ENCODE measurements at regions of chr16 and their contacts with region 1.

Region 1: DNA sequence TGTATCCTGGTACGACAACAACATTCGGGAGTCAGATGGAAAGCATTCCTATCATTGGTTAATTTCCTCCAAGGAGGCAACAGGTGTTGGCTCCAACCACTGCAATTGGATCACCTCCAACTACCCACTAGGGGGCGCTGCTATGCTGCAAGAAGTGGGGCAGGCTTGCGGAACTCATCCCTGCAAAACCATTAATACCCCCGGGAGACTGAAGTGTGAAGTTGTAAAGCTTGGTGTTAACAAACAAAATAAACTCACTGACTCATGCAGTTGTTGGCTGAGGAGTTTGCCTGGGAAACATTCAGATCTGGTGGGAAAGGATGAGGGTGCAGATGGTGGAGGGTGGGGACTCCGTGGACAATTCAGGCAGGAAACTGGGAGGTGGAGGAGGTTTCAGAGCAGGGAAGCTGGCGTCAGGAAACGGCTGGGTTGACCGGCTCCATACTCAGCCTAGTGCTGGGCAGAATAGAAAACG is 84.9 kb downstream of the HS3ST2 start:
- DNase-seq: peak; percentile 73
- H3K4me3 ChIP-seq: peak overlapping the region in 1 of 2 experiments; percentile 34; a peak in 1 of 4 replicates
- H3K27ac ChIP-seq: no peak overlapping the region
- H3K4me1 ChIP-seq: peaks cover 0 to 4% of the 10 kb centered on the region in 2 experiments; a peak in 1 of 4 replicates
- H3K27me3 ChIP-seq: no peaks in the 10 kb centered on the region
- CTCF ChIP-seq: peak; percentile 86
- EP300 ChIP-seq: no peak
- RAD21 ChIP-seq: peak; percentile 94

Region 2: GRCh38 chr16:22874394-22874793 is 24.5 kb before region 1 on chr16:
- CTCF ChIA-PET with region 1: interaction called, 29 read pairs
- POLR2A ChIA-PET with region 1: no interaction called
- DNase-seq: no peak
- H3K4me3 ChIP-seq: no peak overlapping the region
- H3K27ac ChIP-seq: no peak overlapping the region; a peak in 1 of 4 replicates
- H3K4me1 ChIP-seq: peaks cover 0 to 22% of the 10 kb centered on the region in 2 experiments; a peak in 1 of 4 replicates
- H3K27me3 ChIP-seq: no peaks in the 10 kb centered on the region
- CTCF ChIP-seq: no peak
- EP300 ChIP-seq: no peak
- RAD21 ChIP-seq: no peak

Region 3: GRCh38 chr16:22924492-22924891 is 25.6 kb after region 1 on chr16:
- CTCF ChIA-PET with region 1: interaction called, 39 read pairs
- POLR2A ChIA-PET with region 1: no interaction called
- DNase-seq: no peak
- H3K4me3 ChIP-seq: no peak overlapping the region
- H3K27ac ChIP-seq: no peak overlapping the region
- H3K4me1 ChIP-seq: peaks cover 0 to 6% of the 10 kb centered on the region in 2 experiments; a peak in 1 of 4 replicates
- H3K27me3 ChIP-seq: no peaks in the 10 kb centered on the region
- CTCF ChIP-seq: no peak
- EP300 ChIP-seq: no peak
- RAD21 ChIP-seq: no peak

Region 4: DNA sequence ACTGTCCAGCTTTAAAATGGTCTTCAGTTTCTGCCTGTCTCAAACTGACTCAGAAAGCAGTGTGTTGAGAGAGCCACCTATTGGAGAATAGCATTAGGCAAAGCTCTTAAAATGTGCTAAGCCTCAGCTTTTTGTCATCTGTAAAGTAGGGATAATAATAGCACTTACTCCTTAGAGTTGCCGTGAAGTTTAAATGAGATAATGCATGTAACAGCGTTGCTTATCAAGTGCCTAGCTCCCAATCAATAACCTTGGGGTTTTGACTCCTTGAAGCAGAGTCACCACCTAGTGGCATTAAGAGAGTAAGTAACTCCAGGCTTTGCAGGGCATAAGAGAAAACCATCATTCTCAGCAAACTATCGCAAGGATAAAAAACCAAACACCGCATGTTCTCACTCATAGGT is 78.4 kb after region 1 on chr16:
- CTCF ChIA-PET with region 1: interaction called, 165 read pairs
- POLR2A ChIA-PET with region 1: no interaction called
- DNase-seq: no peak
- H3K4me3 ChIP-seq: no peak overlapping the region
- H3K27ac ChIP-seq: no peak overlapping the region
- H3K4me1 ChIP-seq: no peaks in the 10 kb centered on the region
- H3K27me3 ChIP-seq: no peaks in the 10 kb centered on the region
- CTCF ChIP-seq: peak; percentile 38; the same call in 1 of the 2 replicates
- EP300 ChIP-seq: no peak
- RAD21 ChIP-seq: 0 out of 2 replicates have a peak, but pooled peaks have one; percentile 55

Region 5: DNA sequence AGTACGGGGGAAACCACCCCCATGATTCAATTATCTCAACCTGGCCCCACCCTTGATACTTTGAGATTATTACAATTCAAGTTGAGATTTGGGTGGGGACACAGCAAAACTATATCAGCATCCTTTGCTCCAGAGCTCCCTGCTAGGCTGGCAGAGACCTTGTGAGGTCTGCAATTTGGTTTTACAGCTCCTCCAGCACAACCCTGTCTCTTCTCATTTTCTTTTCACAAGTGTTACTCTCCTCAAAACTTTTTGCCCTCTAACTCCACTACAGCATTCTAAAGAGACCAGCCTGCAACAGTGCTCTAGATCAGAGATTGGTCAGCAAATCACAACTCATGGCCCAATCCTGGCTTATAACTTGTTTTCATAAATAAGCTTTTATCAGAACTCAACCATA is 136.3 kb after region 1 on chr16:
- CTCF ChIA-PET with region 1: interaction called, 10 read pairs
- POLR2A ChIA-PET with region 1: no interaction called
- DNase-seq: no peak
- H3K4me3 ChIP-seq: no peak overlapping the region
- H3K27ac ChIP-seq: no peak overlapping the region
- H3K4me1 ChIP-seq: peaks cover 0 to 7% of the 10 kb centered on the region in 2 experiments; a peak in 1 of 4 replicates
- H3K27me3 ChIP-seq: no peaks in the 10 kb centered on the region
- CTCF ChIP-seq: no peak
- EP300 ChIP-seq: no peak
- RAD21 ChIP-seq: no peak

Region 6: DNA sequence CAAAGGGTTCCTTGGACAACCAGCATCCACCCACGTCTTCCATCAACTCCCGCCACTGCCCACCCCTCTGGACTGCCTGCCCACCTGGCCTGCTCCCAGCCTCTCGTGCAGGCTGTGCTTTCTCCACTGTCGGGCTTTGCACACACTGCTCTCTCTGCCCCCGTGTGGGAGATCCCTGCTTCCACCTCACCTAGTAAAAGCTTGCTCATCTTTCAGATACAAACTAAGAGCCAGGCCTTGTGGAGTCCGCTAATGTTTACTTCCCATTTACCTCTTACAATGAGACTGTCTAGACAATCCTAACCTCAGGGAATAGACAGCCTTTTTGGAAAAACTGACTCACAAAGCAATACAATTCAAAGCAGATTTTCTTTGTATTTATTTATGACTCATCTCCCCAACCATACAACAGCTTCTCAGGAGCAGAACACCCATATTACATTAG is 182.8 kb after region 1 on chr16:
- CTCF ChIA-PET with region 1: interaction called, 14 read pairs
- POLR2A ChIA-PET with region 1: interaction called, 3 read pairs
- DNase-seq: peak; percentile 42
- H3K4me3 ChIP-seq: no peak overlapping the region
- H3K27ac ChIP-seq: peak overlapping the region; percentile 80 to 86
- H3K4me1 ChIP-seq: peaks cover 18 to 33% of the 10 kb centered on the region in 2 experiments
- H3K27me3 ChIP-seq: no peaks in the 10 kb centered on the region
- CTCF ChIP-seq: peak; percentile 34
- EP300 ChIP-seq: peak in 1 of 2 experiments; percentile 37; a peak in 1 of 4 replicates
- RAD21 ChIP-seq: no peak; the same call in 1 of the 2 replicates